ENCODE measurements at regions of chr5 and their contacts with region 1.

Region 1: DNA sequence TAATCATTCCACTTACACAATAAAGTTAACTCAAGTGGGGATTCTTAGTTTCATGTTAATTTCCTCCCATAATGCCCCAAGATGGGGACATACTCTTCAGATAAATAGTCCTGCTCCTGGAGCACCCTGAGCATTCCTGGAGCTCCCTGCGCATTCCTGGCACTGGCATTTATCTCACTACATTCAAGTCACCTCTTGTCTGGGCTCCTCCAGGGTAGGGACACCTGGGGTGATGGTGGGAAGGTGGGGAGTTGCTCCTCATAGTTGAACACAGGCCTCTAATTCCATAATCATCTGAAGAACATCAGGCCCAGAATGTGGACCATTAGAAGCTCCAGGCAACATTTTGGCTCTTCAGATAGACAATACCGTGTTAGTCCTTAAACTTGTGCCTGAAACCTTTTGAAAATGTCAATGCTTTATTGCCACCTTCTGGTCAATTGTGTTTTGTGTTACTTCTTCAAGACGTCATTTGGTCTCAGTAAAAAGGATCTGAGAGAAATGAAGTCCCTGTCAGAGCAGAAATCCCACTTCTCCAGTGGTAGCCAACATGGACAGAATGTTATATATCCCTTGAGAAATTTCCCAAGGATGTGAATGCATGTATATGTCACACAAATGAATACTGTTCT is 14.2 kb upstream of the AGGF1 start:
- DNase-seq: no peak
- H3K4me3 ChIP-seq: no peak overlapping the region
- H3K27ac ChIP-seq: no peak overlapping the region
- H3K4me1 ChIP-seq: peaks cover 0 to 3% (median 0%) of the 10 kb centered on the region in 4 experiments; a peak in 1 of 7 replicates
- H3K27me3 ChIP-seq: no peaks in the 10 kb centered on the region
- CTCF ChIP-seq: peak in 2 of 3 experiments; percentile 28 to 46; a peak in 2 of 4 replicates
- EP300 ChIP-seq: no peak
- POLR2A ChIP-seq: no peak
- RAD21 ChIP-seq: peak; percentile 73 to 76

Region 2: GRCh38 chr5:76867827-76868693 is 148.0 kb before region 1 on chr5:
- CTCF ChIA-PET with region 1: interaction called, 48 read pairs
- POLR2A ChIA-PET with region 1: no interaction called
- DNase-seq: peak; percentile 47 to 86
- H3K4me3 ChIP-seq: no peak overlapping the region
- H3K27ac ChIP-seq: no peak overlapping the region
- H3K4me1 ChIP-seq: peaks cover 0 to 4% (median 0%) of the 10 kb centered on the region in 4 experiments; a peak in 2 of 7 replicates
- H3K27me3 ChIP-seq: no peaks in the 10 kb centered on the region
- CTCF ChIP-seq: peak in 2 of 3 experiments; percentile 76 to 80; a peak in 3 of 4 replicates
- EP300 ChIP-seq: no peak
- POLR2A ChIP-seq: no peak
- RAD21 ChIP-seq: peak; percentile 97 to 99

Region 3: GRCh38 chr5:76874088-76874581 is 141.9 kb before region 1 on chr5:
- CTCF ChIA-PET with region 1: interaction called, 48 read pairs
- POLR2A ChIA-PET with region 1: no interaction called
- DNase-seq: no peak
- H3K4me3 ChIP-seq: no peak overlapping the region
- H3K27ac ChIP-seq: no peak overlapping the region
- H3K4me1 ChIP-seq: peaks cover 1 to 9% (median 6%) of the 10 kb centered on the region in 4 experiments; a peak in 5 of 7 replicates
- H3K27me3 ChIP-seq: no peaks in the 10 kb centered on the region
- CTCF ChIP-seq: no peak
- EP300 ChIP-seq: no peak
- POLR2A ChIP-seq: no peak
- RAD21 ChIP-seq: no peak

Region 4: DNA sequence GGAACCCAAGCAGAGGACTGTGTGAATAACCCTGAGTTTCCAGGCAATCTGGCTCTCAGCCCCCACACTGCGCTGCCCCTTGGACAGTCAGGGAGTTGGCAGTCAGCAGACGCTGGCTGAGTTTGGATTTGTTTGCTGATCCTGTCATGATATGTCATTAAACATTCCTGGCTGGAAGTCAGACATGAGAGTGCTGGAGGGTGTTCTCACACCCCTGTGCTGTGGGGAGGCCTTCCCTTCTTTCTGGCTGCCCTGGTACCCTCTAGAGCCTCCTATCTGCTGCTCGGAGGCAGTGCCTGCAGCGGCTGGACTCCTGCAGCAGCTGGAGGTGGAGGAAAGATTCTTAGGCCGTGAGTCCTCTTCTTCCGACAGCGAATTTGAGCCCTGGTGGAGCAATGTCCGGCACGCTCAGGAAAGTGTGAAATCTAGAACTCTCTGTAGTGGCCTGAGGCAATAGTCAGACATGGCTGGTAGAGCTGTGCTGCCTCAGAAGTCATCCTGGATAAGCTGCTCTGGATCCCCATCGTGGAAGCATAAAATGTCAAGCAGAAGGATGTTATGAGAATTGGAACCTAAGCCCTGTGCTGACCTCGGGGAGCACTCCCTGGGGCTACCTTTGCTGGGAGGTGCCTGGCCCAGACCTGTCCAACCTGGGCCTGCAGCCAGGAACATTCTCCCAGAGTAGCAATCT is 266.4 kb after region 1 on chr5:
- CTCF ChIA-PET with region 1: no interaction called
- POLR2A ChIA-PET with region 1: no interaction called
- DNase-seq: no peak
- H3K4me3 ChIP-seq: no peak overlapping the region
- H3K27ac ChIP-seq: no peak overlapping the region
- H3K4me1 ChIP-seq: no peaks in the 10 kb centered on the region
- H3K27me3 ChIP-seq: no peaks in the 10 kb centered on the region
- CTCF ChIP-seq: peak; percentile 22 to 44 (median 40); a peak in 3 of 4 replicates
- EP300 ChIP-seq: no peak
- POLR2A ChIP-seq: no peak
- RAD21 ChIP-seq: peak in 1 of 2 experiments; percentile 37; a peak in 2 of 4 replicates

Measured in H1 (cell line).